Endothelial cell of umbilical vein (primary cell): ENCODE measurements at regions of chr1 and their contacts with region 1.

Region 1: GRCh38 chr1:12539705-12540579 is 78.1 kb downstream of the DHRS3 start:
- DNase-seq: peak; percentile 70
- H3K4me3 ChIP-seq: no peak overlapping the region
- H3K27ac ChIP-seq: no peak overlapping the region
- H3K4me1 ChIP-seq: peaks cover 21% of the 10 kb centered on the region
- H3K27me3 ChIP-seq: no peaks in the 10 kb centered on the region
- CTCF ChIP-seq: no peak
- POLR2A ChIP-seq: no peak

Region 2: DNA sequence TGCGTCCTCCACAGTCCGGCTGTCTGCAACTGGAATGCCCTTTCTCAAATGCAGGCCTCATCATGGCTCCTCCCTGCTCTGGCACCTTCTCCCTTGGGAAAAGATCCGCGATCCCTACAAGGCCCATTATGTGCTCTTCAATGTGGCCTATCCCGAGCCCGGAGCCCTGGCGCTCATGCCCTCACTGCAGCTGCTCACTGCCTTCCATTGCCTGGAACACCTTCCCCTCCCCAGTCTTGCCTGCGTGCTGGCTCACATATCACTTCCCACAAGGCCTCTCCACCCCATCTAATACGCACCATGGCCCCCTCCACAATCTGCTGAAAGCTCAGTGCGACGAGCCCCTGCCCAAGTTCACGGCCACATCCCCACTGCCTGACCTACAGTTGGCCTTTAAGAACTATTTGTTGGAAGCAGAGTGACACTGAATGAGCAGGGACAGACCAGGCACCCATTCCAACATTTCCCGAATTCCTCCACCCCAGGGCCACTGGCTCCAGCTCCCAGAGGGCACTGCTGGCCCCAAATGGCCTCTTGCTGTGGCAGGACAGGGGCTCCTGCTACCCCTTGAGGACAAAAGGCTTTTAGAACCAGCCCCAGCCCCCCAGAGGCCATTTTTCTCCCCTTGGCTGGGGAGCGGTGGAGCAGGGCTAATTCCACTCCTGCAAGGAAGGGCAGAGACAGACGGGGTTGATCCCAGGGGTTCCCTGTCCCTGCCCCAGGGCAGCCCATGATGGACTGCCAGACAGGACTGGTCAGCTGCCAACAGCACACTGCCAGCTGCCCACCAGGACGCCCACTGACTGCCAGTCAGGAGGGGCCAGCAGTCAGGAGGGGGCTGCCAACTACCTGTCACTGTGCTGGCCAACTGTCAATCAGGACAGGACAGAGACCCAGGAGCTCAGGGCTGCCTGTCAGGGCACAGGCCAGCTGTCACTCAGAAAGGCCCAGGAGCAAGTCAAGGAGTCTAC is 13.3 kb after region 1 on chr1:
- CTCF ChIA-PET with region 1: no interaction called
- POLR2A ChIA-PET with region 1: no interaction called
- dilution Hi-C with region 1: no loop called
- intact Hi-C with region 1: no loop called
- DNase-seq: no peak
- H3K4me3 ChIP-seq: no peak overlapping the region
- H3K27ac ChIP-seq: no peak overlapping the region
- H3K4me1 ChIP-seq: peaks cover 12% of the 10 kb centered on the region
- H3K27me3 ChIP-seq: no peaks in the 10 kb centered on the region
- CTCF ChIP-seq: no peak
- POLR2A ChIP-seq: no peak

Region 3: GRCh38 chr1:12579793-12580499 is 40.0 kb after region 1 on chr1:
- CTCF ChIA-PET with region 1: no interaction called
- POLR2A ChIA-PET with region 1: no interaction called
- dilution Hi-C with region 1: no loop called
- intact Hi-C with region 1: no loop called
- DNase-seq: no peak
- H3K4me3 ChIP-seq: no peak overlapping the region
- H3K27ac ChIP-seq: no peak overlapping the region
- H3K4me1 ChIP-seq: no peaks in the 10 kb centered on the region
- H3K27me3 ChIP-seq: no peaks in the 10 kb centered on the region
- CTCF ChIP-seq: no peak
- POLR2A ChIP-seq: no peak

Region 4: GRCh38 chr1:12596007-12596821 is 56.3 kb after region 1 on chr1:
- CTCF ChIA-PET with region 1: no interaction called
- POLR2A ChIA-PET with region 1: no interaction called
- dilution Hi-C with region 1: no loop called
- intact Hi-C with region 1: loop called (anchors 5 kb)
- DNase-seq: peak; percentile 96
- H3K4me3 ChIP-seq: no peak overlapping the region
- H3K27ac ChIP-seq: peak overlapping the region; percentile 93
- H3K4me1 ChIP-seq: peaks cover 28% of the 10 kb centered on the region
- H3K27me3 ChIP-seq: no peaks in the 10 kb centered on the region
- CTCF ChIP-seq: no peak
- POLR2A ChIP-seq: peak; percentile 12